ENCODE measurements at regions of chr1 and their contacts with region 1.

Region 1: DNA sequence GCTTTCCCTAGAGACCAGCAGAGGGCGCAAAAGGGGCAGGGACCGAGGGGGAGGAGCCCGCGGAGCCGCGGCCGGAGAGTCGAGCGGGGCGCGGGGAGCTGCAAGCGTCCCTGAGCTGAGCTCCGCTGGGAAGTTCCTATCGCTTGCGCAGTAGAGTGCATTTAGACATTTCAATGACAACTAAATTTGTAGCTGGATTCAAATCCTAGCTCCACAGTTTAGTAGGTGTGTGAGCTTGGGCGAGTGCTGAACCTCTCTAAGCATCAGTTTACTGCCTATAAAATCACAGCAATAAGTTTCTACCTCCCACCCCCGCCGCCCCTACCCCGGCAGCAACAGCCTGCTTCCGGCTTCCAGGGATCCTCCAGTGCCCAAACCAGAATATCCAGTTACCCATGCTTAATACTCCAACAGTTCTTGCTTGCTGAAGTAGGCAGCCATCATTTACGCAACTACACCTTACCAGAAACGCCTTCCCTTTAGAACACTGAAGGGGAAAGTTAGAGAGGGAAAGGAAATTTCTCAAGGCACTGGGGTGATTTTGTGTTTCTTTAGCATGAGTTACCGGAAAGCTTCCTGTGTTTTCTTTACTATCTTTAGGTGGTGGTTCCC is 9.1 kb downstream of the TLR5 start:
- DNase-seq: peak; percentile 66 to 91 (median 72)
- ATAC-seq: peak; percentile 90
- H3K4me3 ChIP-seq: peak overlapping the region; percentile 42
- H3K4me3 Mint-ChIP-seq: peak overlapping the region; percentile 84
- H3K27ac ChIP-seq: no peak overlapping the region
- H3K27ac Mint-ChIP-seq: no peak overlapping the region
- H3K4me1 ChIP-seq: peaks cover 19% of the 10 kb centered on the region
- H3K4me1 Mint-ChIP-seq: peaks cover 31% of the 10 kb centered on the region
- H3K27me3 ChIP-seq: peaks cover 5 to 7% of the 10 kb centered on the region in 2 experiments
- H3K27me3 Mint-ChIP-seq: no peaks in the 10 kb centered on the region
- CTCF ChIP-seq: peak; percentile 95

Region 2: GRCh38 chr1:223123011-223123610 is 10.8 kb before region 1 on chr1:
- CTCF ChIA-PET with region 1: interaction called, 60 read pairs
- POLR2A ChIA-PET with region 1: interaction called, 6 read pairs
- intact Hi-C with region 1: no loop called
- DNase-seq: no peak
- ATAC-seq: no peak
- H3K4me3 ChIP-seq: peak overlapping the region; percentile 23
- H3K4me3 Mint-ChIP-seq: peak overlapping the region; percentile 20
- H3K27ac ChIP-seq: no peak overlapping the region
- H3K27ac Mint-ChIP-seq: no peak overlapping the region
- H3K4me1 ChIP-seq: peaks cover 6% of the 10 kb centered on the region
- H3K4me1 Mint-ChIP-seq: peaks cover 8% of the 10 kb centered on the region
- H3K27me3 ChIP-seq: no peaks in the 10 kb centered on the region
- H3K27me3 Mint-ChIP-seq: no peaks in the 10 kb centered on the region
- CTCF ChIP-seq: no peak

Region 3: DNA sequence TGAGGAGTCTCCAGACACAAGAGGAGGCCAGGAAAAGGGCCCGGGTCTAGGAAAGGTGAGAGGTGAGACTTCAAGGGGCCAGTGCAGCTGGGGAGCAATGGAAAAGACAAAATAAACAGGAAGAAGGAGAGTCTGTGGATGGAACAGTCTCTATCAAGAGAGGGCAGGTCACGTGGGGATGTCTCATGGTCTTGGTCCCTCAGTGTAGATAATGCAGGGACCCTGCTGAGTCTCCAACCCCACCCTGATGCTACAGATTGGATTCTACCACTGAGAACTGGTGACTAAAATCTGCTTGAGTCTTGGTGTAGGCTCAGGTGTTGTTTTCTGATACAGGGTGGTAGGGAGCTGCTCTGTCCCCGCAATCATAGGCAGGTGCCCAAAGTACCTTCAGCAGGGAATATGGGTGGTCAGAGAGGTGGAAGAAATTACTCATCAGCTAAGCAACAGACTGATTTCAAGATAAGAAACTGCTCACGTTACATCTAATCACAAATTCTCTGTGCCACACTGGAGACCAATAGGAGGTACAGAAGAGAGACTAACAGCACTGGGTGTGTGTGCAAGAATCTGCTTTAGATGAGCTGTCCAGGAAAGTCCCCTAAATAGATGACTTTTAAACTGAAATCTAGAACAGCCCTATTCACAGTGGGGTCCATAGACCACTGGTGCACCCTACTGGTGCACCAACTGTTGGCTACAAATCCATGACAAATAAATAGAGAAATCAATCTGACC is 110.6 kb after region 1 on chr1:
- CTCF ChIA-PET with region 1: interaction called, 3 read pairs
- POLR2A ChIA-PET with region 1: interaction called, 5 read pairs
- intact Hi-C with region 1: loop called (anchors 1 to 2 kb)
- DNase-seq: peak in 5 of 14 experiments; percentile 14 to 61 (median 28)
- ATAC-seq: peak; percentile 24
- H3K4me3 ChIP-seq: no peak overlapping the region
- H3K4me3 Mint-ChIP-seq: no peak overlapping the region
- H3K27ac ChIP-seq: no peak overlapping the region
- H3K27ac Mint-ChIP-seq: peak overlapping the region; percentile 6
- H3K4me1 ChIP-seq: peaks cover 29% of the 10 kb centered on the region
- H3K4me1 Mint-ChIP-seq: peaks cover 73% of the 10 kb centered on the region
- H3K27me3 ChIP-seq: no peaks in the 10 kb centered on the region
- H3K27me3 Mint-ChIP-seq: no peaks in the 10 kb centered on the region
- CTCF ChIP-seq: peak; percentile 14

Region 4: DNA sequence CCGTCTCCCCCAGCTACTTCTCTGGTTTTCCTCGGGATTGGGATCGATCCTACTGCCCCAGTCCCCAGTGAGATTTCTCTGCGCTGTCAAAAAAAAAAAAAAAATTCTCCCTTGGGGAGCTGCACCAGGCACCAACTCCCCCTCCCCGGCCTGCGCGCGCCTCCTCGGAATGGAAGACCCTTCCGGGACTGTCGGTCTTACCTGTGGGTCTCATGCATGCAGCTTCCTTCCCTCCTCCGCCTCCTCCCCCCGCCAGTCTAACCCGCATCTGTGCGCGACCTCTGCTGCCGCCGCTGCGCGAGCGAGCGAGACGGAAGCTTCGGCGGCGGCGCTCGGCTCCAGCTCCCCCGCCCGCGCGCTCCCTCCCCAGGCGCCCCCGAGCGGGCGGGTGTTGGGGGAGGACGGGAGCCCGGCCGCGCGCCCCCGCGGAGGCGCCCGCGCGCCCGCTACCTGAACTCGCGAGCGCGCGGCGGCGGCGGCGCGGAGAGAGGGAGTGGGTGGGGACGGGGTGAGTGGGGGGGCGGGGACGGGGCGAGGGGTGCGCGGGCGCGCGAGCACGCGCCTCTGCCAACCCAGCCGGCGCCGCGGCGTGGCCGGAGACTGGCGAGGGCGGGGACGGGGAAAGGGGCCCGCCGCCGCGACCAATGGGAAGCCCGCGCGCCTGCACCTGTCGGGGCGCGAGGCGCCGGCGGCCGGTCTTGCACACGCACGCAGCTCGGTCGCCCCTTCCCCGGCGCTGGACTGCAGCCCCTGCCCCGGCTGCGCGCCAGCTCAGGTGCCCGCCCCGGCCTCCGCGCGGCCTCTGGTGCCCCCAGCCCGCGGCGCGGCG is 230.1 kb after region 1 on chr1 and contains the start of gene SUSD4:
- CTCF ChIA-PET with region 1: interaction called, 6 read pairs
- POLR2A ChIA-PET with region 1: interaction called, 14 read pairs
- intact Hi-C with region 1: loop called (anchors 2 kb)
- DNase-seq: peak; percentile 55 to 91 (median 76)
- ATAC-seq: peak; percentile 89
- H3K4me3 ChIP-seq: peak within 1 kb of the TSS; percentile 66
- H3K4me3 Mint-ChIP-seq: peak within 1 kb of the TSS; percentile 98
- H3K27ac ChIP-seq: no peak within 1 kb of the TSS
- H3K27ac Mint-ChIP-seq: peak within 1 kb of the TSS; percentile 82
- H3K4me1 ChIP-seq: peaks cover 22% of the 10 kb centered on the region
- H3K4me1 Mint-ChIP-seq: peaks cover 39% of the 10 kb centered on the region
- H3K27me3 ChIP-seq: peaks cover 0 to 4% of the 10 kb centered on the region in 2 experiments
- H3K27me3 Mint-ChIP-seq: no peaks in the 10 kb centered on the region
- CTCF ChIP-seq: no peak
- total RNA-seq, gene SUSD4: 13.0 to 13.8 TPM

Region 5: DNA sequence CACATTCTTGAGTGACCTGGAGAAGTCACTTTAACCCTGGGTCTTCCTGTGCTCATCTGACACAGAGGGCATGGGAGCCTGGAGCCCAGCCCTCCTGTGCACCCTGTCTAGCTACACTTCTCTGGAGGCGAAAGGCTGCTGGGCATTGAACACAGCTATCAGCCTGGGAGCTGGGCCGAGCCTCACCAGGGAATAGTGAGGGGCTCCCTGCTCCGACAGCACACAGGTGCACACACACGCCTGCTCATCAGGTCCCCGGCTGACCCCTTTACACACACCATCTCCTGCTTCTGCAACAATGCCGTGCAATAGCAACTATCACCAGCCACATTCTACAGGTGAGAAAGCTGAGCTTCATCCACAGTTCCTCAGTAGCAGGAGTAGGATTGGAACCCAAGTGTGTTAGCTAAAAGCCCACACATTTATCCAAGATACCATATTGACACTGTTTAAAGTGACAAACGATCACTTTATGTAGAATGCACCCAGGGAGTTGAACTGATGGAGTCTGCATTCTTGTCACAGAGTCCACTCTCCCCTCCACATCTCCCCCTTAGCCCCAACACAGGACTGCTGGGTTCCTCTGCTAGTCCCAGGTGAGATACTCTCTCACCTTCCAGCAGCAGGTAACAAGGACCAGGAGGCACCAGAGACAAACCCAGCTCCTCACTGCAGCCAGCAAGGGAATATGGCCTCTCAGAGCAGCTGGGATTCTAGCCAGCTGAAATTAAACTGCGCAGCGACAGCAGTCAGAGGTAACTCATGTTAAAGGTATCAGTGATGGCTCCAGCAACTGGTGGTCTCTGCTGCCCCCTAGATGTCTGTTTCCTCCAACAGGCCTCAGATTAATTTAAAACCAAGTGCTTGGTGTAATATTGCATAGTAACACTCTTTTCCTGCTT is 549.9 kb after region 1 on chr1:
- CTCF ChIA-PET with region 1: interaction called, 9 read pairs
- POLR2A ChIA-PET with region 1: interaction called, 5 read pairs
- intact Hi-C with region 1: loop called (anchors 1 kb)
- DNase-seq: peak; percentile 39 to 77 (median 50)
- ATAC-seq: peak; percentile 73
- H3K4me3 ChIP-seq: no peak overlapping the region
- H3K4me3 Mint-ChIP-seq: no peak overlapping the region
- H3K27ac ChIP-seq: no peak overlapping the region
- H3K27ac Mint-ChIP-seq: no peak overlapping the region
- H3K4me1 ChIP-seq: peaks cover 2% of the 10 kb centered on the region
- H3K4me1 Mint-ChIP-seq: no peaks in the 10 kb centered on the region
- H3K27me3 ChIP-seq: peaks cover 0 to 2% of the 10 kb centered on the region in 2 experiments
- H3K27me3 Mint-ChIP-seq: peaks cover 16% of the 10 kb centered on the region
- CTCF ChIP-seq: peak; percentile 65

Measured in CD4-positive, alpha-beta T cell (primary cell).